Left ventricle myocardium inferior (tissue), 1 donor: ENCODE measurements at regions of chr3 and their contacts with region 1.

Region 1: GRCh38 chr3:40317061-40317855 is 7.8 kb downstream of the EIF1B start:
- DNase-seq: no peak
- H3K4me3 ChIP-seq: no peak overlapping the region
- H3K27ac ChIP-seq: no peak overlapping the region
- H3K4me1 ChIP-seq: peaks cover 26% of the 10 kb centered on the region
- H3K27me3 ChIP-seq: no peaks in the 10 kb centered on the region
- CTCF ChIP-seq: peak; percentile 86

Region 2: GRCh38 chr3:40191850-40192448 is 125.3 kb before region 1 on chr3:
- intact Hi-C with region 1: loop called (anchors 5 kb)
- DNase-seq: peak; percentile 41
- H3K4me3 ChIP-seq: no peak overlapping the region
- H3K27ac ChIP-seq: no peak overlapping the region
- H3K4me1 ChIP-seq: peaks cover 26% of the 10 kb centered on the region
- H3K27me3 ChIP-seq: no peaks in the 10 kb centered on the region
- CTCF ChIP-seq: peak; percentile 97

Region 3: GRCh38 chr3:40432793-40433192 is 115.5 kb after region 1 on chr3:
- intact Hi-C with region 1: loop called (anchors 10 kb)
- DNase-seq: no peak
- H3K4me3 ChIP-seq: no peak overlapping the region
- H3K27ac ChIP-seq: no peak overlapping the region
- H3K4me1 ChIP-seq: peaks cover 3% of the 10 kb centered on the region
- H3K27me3 ChIP-seq: no peaks in the 10 kb centered on the region
- CTCF ChIP-seq: no peak